Left ventricle myocardium superior (tissue), 1 donor: ENCODE measurements at regions of chr2 and their contacts with region 1.

Region 1: GRCh38 chr2:9333591-9334171 is 89.6 kb downstream of the ITGB1BP1 start:
- DNase-seq: peak; percentile 49
- ATAC-seq: peak; percentile 87

Region 2: DNA sequence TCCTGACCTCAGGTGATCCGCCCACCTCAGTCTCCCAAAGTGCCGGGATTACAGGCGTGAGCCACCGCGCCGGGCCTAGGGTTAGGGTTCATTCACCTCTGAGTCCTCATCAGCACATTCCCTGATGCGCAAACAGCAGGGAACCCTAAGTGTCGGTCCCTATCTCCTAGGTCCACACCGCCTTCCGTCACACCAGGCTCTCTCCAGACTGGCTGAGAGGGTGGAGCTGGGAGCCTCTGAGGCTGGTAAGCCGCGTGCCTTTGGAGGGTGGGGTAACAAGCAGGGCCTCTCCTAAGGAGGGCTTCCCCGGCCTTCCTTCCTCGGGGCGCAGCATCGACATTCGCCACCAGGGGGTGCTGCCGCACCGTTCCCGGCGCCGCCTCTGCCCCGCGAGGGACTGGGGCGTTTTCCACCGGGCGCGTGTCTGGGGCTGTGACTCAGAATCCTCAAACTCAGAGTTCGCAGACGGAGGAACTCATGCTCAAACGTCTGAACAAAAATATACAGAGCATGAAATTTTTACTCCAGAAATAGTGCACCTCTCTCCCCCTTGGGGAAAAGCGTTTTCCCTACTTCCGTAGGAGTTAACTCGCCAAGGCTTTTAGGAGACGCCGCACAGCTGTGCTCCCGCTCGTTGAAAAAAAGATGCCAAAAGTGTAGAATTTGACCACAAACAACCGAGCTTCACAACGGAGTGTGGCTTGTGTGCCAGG is 191.0 kb before region 1 on chr2:
- intact Hi-C with region 1: loop called (anchors 10 kb)
- DNase-seq: peak; percentile 90
- ATAC-seq: peak; percentile 91

Region 3: GRCh38 chr2:9644603-9645002 is 310.9 kb after region 1 on chr2:
- intact Hi-C with region 1: no loop called
- DNase-seq: no peak
- ATAC-seq: no peak